ENCODE measurements at regions of chr2 and their contacts with region 1.

Region 1: DNA sequence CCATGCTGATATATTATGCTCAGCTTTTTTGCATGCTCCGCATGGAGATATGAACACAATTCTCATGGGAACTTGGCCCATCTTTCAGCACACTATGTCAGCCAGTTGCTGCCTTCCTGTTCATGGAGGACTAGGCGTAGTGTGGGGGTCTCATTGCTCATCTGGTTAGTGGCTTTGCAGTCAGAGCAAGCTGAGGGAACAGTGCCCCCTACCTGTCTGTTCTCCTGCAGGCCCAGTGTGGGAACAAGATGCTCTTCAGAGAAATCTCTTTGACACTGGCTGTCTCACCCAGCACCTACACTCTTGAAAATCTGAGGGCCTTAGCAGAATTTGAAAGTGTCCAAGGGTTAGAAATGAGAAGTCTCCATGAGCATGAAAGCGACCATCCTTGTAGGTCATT is 47.1 kb downstream of the SPTBN1 start:
- DNase-seq: no peak
- ATAC-seq: peak; percentile 45
- H3K4me3 Mint-ChIP-seq: no peak overlapping the region
- H3K27ac Mint-ChIP-seq: no peak overlapping the region
- H3K4me1 Mint-ChIP-seq: no peaks in the 10 kb centered on the region
- H3K27me3 Mint-ChIP-seq: no peaks in the 10 kb centered on the region
- CTCF ChIP-seq: no peak

Region 2: GRCh38 chr2:53949457-53949856 is 553.7 kb before region 1 on chr2:
- CTCF ChIA-PET with region 1: no interaction called
- POLR2A ChIA-PET with region 1: no interaction called
- intact Hi-C with region 1: loop called (anchors 10 kb)
- DNase-seq: no peak
- ATAC-seq: no peak
- H3K4me3 Mint-ChIP-seq: no peak overlapping the region
- H3K27ac Mint-ChIP-seq: peak overlapping the region; percentile 32
- H3K4me1 Mint-ChIP-seq: peaks cover 67% of the 10 kb centered on the region
- H3K27me3 Mint-ChIP-seq: no peaks in the 10 kb centered on the region
- CTCF ChIP-seq: no peak

Region 3: GRCh38 chr2:54206596-54206995 is 296.6 kb before region 1 on chr2:
- CTCF ChIA-PET with region 1: interaction called, 5 read pairs
- POLR2A ChIA-PET with region 1: no interaction called
- intact Hi-C with region 1: loop called (anchors 1 kb)
- DNase-seq: no peak
- ATAC-seq: no peak
- H3K4me3 Mint-ChIP-seq: no peak overlapping the region
- H3K27ac Mint-ChIP-seq: no peak overlapping the region
- H3K4me1 Mint-ChIP-seq: no peaks in the 10 kb centered on the region
- H3K27me3 Mint-ChIP-seq: no peaks in the 10 kb centered on the region
- CTCF ChIP-seq: no peak

Region 4: GRCh38 chr2:54310311-54310710 is 192.9 kb before region 1 on chr2:
- CTCF ChIA-PET with region 1: no interaction called
- POLR2A ChIA-PET with region 1: no interaction called
- intact Hi-C with region 1: no loop called
- DNase-seq: no peak
- ATAC-seq: no peak
- H3K4me3 Mint-ChIP-seq: no peak overlapping the region
- H3K27ac Mint-ChIP-seq: no peak overlapping the region
- H3K4me1 Mint-ChIP-seq: no peaks in the 10 kb centered on the region
- H3K27me3 Mint-ChIP-seq: no peaks in the 10 kb centered on the region
- CTCF ChIP-seq: no peak

Region 5: DNA sequence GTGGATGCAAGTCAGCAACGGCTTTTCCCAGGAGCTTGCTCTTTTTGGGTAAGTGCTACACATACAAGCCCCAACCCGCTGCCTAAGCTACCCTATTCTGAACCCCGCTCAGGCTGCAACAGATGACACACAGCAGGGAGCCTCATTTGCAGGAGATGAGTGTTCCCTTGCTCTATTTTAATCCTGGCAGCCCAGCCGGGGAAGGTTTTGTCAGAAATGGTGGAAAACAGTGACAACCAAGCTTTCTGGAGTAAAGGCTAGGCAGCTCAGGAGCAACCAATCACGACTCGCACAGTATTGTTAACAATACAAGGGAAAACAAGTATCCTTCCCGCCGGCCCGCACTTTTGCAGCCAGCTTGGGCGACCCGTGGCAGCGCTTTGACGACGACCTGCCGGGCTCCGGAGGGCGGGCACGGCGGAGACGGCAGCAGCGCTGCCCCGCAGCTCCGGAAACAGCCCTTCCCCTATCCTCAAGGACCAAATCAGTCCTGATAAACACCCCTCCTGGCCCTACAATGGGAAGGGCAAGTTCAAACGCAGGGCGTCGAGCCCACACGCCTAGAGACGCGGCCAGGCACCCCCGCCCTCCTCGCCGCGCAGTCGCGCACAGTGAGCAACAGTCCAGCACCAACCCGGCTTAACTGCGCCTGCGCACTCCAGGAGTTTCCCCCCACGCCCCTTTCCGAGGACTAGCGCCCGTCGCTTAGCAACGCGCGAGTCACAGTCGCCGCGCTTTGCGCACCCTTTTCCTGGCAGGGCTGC is 172.8 kb before region 1 on chr2:
- CTCF ChIA-PET with region 1: no interaction called
- POLR2A ChIA-PET with region 1: no interaction called
- intact Hi-C with region 1: loop called (anchors 10 kb)
- DNase-seq: peak; percentile 77
- ATAC-seq: peak; percentile 96
- H3K4me3 Mint-ChIP-seq: peak overlapping the region; percentile 89
- H3K27ac Mint-ChIP-seq: peak overlapping the region; percentile 70
- H3K4me1 Mint-ChIP-seq: peaks cover 21% of the 10 kb centered on the region
- H3K27me3 Mint-ChIP-seq: peaks cover 13% of the 10 kb centered on the region
- CTCF ChIP-seq: no peak

Region 6: GRCh38 chr2:54558188-54559005 is 55.2 kb after region 1 on chr2:
- CTCF ChIA-PET with region 1: no interaction called
- POLR2A ChIA-PET with region 1: no interaction called
- intact Hi-C with region 1: no loop called
- DNase-seq: peak; percentile 60
- ATAC-seq: peak; percentile 60
- H3K4me3 Mint-ChIP-seq: peak overlapping the region; percentile 89
- H3K27ac Mint-ChIP-seq: peak overlapping the region; percentile 94
- H3K4me1 Mint-ChIP-seq: peaks cover 50% of the 10 kb centered on the region
- H3K27me3 Mint-ChIP-seq: no peaks in the 10 kb centered on the region
- CTCF ChIP-seq: no peak

Measured in activated B cell treated with CpG ODN at 0.5 μM for 24 hours (primary cell).